ENCODE measurements at regions of chr2 and their contacts with region 1.

Region 1: GRCh38 chr2:234135720-234136221 is 85.3 kb downstream of the SPP2 start:
- DNase-seq: peak; percentile 80
- H3K4me3 Mint-ChIP-seq: peak overlapping the region; percentile 11
- H3K27ac Mint-ChIP-seq: peak overlapping the region; percentile 78
- H3K4me1 Mint-ChIP-seq: peaks cover 21% of the 10 kb centered on the region
- H3K27me3 Mint-ChIP-seq: no peaks in the 10 kb centered on the region
- CTCF ChIP-seq: peak; percentile 79

Region 2: DNA sequence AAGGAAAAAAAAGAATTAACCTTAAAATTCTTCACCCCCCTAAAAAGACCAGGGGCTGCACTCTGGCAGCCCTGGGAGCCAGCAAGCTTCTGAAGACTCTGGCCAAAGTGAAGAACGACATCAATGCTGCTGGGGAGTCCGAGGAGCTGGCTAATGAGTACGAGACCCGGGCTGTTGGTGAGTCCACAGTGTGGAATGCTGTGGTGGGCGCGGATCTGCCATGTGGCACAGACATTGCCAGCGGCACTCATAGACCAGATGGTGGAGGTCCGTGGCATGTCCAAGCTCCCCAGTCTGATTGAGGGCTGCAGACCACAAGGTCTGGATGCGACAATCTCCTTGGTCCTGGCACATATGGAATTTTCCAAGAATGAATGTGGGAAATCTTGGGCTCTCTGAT is 171.2 kb before region 1 on chr2:
- CTCF ChIA-PET with region 1: interaction called, 11 read pairs
- intact Hi-C with region 1: no loop called
- DNase-seq: no peak
- H3K4me3 Mint-ChIP-seq: no peak overlapping the region
- H3K27ac Mint-ChIP-seq: no peak overlapping the region
- H3K4me1 Mint-ChIP-seq: no peaks in the 10 kb centered on the region
- H3K27me3 Mint-ChIP-seq: no peaks in the 10 kb centered on the region
- CTCF ChIP-seq: no peak

Region 3: DNA sequence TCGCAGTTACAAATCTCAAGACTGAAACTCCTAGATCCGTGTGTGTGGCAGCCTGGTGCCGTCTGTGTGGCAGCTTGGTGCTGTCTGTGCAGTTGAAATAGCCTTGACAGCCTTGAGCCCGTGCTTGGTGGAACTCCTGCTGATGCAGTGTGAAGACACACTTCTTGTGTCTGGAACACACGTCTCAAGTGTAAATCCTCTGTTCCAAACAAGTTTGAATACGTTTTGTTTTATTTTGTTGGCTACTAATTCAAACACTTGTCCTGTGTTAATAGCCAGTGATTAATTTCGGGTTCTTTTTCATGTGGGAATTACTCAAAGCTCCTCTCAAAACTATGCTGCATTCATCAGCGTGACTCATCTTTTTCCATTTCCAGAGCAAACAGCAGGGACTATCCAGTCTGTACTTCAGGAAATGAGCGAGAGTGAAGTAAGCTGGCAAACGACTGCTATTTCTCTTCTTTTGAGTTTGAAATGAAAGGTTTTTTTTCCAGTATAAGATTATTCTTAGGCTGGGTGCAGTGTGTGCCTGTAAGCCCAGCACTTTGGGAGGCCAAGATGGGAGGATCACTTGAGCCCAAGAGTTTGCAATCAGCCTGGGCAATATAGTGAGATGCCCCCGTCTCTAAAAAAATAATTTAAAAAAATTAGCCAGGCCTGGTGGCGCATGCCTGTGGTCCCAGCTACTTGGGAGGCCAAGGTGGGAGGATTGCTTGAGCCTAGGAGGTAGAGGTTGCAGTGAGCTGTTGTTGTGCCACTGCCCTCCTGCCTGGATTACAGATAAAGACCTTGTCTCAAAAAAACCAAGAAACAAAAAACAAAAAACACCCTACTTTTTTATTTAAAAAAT is 67.6 kb after region 1 on chr2:
- CTCF ChIA-PET with region 1: interaction called, 8 read pairs
- intact Hi-C with region 1: loop called (anchors 5 kb)
- DNase-seq: peak; percentile 51
- H3K4me3 Mint-ChIP-seq: peak overlapping the region; percentile 36
- H3K27ac Mint-ChIP-seq: peak overlapping the region; percentile 95
- H3K4me1 Mint-ChIP-seq: peaks cover 38% of the 10 kb centered on the region
- H3K27me3 Mint-ChIP-seq: peaks cover 1% of the 10 kb centered on the region
- CTCF ChIP-seq: no peak

Region 4: GRCh38 chr2:234231460-234231859 is 95.7 kb after region 1 on chr2:
- CTCF ChIA-PET with region 1: no interaction called
- intact Hi-C with region 1: no loop called
- DNase-seq: no peak
- H3K4me3 Mint-ChIP-seq: no peak overlapping the region
- H3K27ac Mint-ChIP-seq: no peak overlapping the region
- H3K4me1 Mint-ChIP-seq: no peaks in the 10 kb centered on the region
- H3K27me3 Mint-ChIP-seq: no peaks in the 10 kb centered on the region
- CTCF ChIP-seq: no peak

Region 5: GRCh38 chr2:234257856-234258561 is 122.2 kb after region 1 on chr2:
- CTCF ChIA-PET with region 1: interaction called, 12 read pairs
- intact Hi-C with region 1: loop called (anchors 1 kb)
- DNase-seq: peak; percentile 89
- H3K4me3 Mint-ChIP-seq: peak overlapping the region; percentile 44
- H3K27ac Mint-ChIP-seq: peak overlapping the region; percentile 91
- H3K4me1 Mint-ChIP-seq: peaks cover 48% of the 10 kb centered on the region
- H3K27me3 Mint-ChIP-seq: no peaks in the 10 kb centered on the region
- CTCF ChIP-seq: peak; percentile 80

Region 6: GRCh38 chr2:234278556-234279255 is 142.9 kb after region 1 on chr2:
- CTCF ChIA-PET with region 1: no interaction called
- intact Hi-C with region 1: no loop called
- DNase-seq: no peak
- H3K4me3 Mint-ChIP-seq: no peak overlapping the region
- H3K27ac Mint-ChIP-seq: no peak overlapping the region
- H3K4me1 Mint-ChIP-seq: peaks cover 8% of the 10 kb centered on the region
- H3K27me3 Mint-ChIP-seq: peaks cover 8% of the 10 kb centered on the region
- CTCF ChIP-seq: no peak

Region 7: GRCh38 chr2:234500394-234501006 is 364.7 kb after region 1 on chr2:
- CTCF ChIA-PET with region 1: interaction called, 6 read pairs
- intact Hi-C with region 1: loop called (anchors 1 kb)
- DNase-seq: peak; percentile 42
- H3K4me3 Mint-ChIP-seq: no peak overlapping the region
- H3K27ac Mint-ChIP-seq: no peak overlapping the region
- H3K4me1 Mint-ChIP-seq: peaks cover 32% of the 10 kb centered on the region
- H3K27me3 Mint-ChIP-seq: no peaks in the 10 kb centered on the region
- CTCF ChIP-seq: peak; percentile 42

Region 8: DNA sequence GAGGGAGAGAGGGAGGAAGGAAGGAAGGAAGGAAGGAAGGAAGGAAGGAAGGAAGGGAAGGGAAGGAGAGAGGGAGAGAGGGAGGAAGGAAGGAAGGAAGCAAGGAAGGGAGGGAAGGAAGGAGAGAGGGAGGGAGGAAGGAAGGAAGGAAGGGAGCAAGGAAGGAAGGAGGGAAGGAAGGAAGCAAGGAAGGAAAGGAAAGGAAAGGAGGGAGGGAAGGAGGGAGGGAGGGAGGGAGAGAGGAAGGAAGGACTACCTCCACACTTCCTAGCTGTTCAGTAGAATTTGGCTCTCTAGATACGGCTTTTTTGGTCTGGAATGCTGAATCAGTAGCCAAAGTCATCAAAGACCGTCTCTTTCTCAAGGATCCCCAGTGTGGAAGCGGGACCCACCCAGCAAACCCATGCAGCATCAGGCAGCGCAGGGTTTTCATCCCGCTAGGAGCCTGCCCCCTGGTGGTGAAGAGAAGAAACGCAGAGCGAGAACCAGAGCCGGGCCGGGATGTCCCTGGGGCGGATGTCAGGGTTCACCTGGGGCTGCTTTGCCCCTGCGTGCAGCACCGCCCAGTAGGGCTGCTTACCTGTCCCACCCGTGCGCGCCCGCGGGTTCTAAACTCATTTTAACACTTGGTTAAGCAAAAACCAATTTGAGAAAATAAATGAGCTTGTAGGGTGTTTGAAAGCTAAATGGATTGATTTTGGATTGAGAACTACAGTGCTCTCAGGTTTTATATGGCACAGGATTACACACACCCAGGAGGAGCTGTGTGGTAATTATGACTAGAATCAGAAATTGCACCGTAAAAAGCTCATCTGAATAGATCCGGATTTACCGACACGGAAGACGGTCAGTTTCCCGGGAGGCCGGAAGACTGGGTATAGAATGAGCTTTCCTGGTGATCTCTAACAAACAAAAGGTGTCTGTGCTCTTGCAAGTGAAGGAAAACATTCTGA is 409.2 kb after region 1 on chr2:
- CTCF ChIA-PET with region 1: interaction called, 14 read pairs
- intact Hi-C with region 1: loop called (anchors 2 kb)
- DNase-seq: peak; percentile 85
- H3K4me3 Mint-ChIP-seq: no peak overlapping the region
- H3K27ac Mint-ChIP-seq: no peak overlapping the region
- H3K4me1 Mint-ChIP-seq: peaks cover 9% of the 10 kb centered on the region
- H3K27me3 Mint-ChIP-seq: peaks cover 39% of the 10 kb centered on the region
- CTCF ChIP-seq: peak; percentile 94

Region 9: DNA sequence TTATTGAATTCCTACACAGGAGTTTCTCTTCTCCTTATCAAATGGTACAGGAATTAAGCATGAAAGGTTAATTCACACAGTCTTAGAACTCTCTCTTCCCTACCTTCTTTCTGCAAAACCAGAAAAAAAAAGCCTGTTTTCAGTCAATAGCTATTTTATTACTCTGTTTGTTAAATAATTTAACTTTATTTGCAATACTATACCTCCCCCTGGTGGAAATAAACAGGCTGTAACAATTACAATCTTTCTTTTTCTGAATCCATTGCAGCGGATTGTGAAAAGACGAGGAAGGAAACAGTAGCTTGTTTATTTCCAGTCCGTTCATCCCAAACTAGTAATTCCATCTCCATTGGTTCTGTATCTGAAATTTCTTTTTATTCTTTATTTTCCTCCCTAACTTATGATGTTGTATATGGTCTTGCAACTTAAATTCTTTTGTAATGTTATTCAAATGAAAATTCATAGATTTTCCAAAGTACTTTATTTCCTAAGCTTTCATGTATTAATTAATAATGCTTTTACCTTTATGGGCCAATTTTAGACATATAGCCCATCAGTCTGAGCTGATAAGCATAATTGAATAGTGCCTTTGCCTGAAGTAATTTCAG is 981.2 kb after region 1 on chr2:
- CTCF ChIA-PET with region 1: interaction called, 5 read pairs
- intact Hi-C with region 1: loop called (anchors 10 kb)
- DNase-seq: no peak
- H3K4me3 Mint-ChIP-seq: no peak overlapping the region
- H3K27ac Mint-ChIP-seq: no peak overlapping the region
- H3K4me1 Mint-ChIP-seq: no peaks in the 10 kb centered on the region
- H3K27me3 Mint-ChIP-seq: peaks cover 46% of the 10 kb centered on the region
- CTCF ChIP-seq: peak; percentile 43